Endothelial cell of umbilical vein (primary cell): ENCODE measurements at regions of chr3 and their contacts with region 1.

Region 1: GRCh38 chr3:38521391-38521987 is 25.3 kb downstream of the EXOG start:
- DNase-seq: peak; percentile 81
- H3K4me3 ChIP-seq: no peak overlapping the region
- H3K27ac ChIP-seq: no peak overlapping the region
- H3K4me1 ChIP-seq: peaks cover 4% of the 10 kb centered on the region
- H3K27me3 ChIP-seq: no peaks in the 10 kb centered on the region
- CTCF ChIP-seq: peak; percentile 84
- POLR2A ChIP-seq: no peak

Region 2: DNA sequence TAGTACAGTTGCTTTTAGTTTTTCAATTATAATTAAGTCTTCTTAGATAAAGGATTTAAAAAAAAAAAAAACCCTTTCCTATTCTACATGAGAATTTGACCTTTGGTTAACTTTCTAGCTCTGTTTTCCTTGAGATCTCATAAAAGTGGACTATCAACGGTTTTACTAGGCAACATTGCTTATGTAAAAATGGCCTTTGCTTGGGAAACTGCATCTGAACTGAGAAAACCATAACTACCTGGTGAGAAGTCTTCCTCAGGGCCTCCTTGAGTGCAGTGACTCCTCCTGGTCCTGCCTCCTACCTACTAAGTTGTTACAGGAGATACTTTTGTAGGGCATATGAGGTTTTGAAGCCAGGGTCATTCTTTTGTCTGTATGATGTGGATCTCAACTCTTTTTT is 109.9 kb before region 1 on chr3:
- CTCF ChIA-PET with region 1: no interaction called
- POLR2A ChIA-PET with region 1: no interaction called
- dilution Hi-C with region 1: no loop called
- intact Hi-C with region 1: no loop called
- DNase-seq: no peak
- H3K4me3 ChIP-seq: no peak overlapping the region
- H3K27ac ChIP-seq: no peak overlapping the region
- H3K4me1 ChIP-seq: no peaks in the 10 kb centered on the region
- H3K27me3 ChIP-seq: no peaks in the 10 kb centered on the region
- CTCF ChIP-seq: no peak
- POLR2A ChIP-seq: no peak

Region 3: DNA sequence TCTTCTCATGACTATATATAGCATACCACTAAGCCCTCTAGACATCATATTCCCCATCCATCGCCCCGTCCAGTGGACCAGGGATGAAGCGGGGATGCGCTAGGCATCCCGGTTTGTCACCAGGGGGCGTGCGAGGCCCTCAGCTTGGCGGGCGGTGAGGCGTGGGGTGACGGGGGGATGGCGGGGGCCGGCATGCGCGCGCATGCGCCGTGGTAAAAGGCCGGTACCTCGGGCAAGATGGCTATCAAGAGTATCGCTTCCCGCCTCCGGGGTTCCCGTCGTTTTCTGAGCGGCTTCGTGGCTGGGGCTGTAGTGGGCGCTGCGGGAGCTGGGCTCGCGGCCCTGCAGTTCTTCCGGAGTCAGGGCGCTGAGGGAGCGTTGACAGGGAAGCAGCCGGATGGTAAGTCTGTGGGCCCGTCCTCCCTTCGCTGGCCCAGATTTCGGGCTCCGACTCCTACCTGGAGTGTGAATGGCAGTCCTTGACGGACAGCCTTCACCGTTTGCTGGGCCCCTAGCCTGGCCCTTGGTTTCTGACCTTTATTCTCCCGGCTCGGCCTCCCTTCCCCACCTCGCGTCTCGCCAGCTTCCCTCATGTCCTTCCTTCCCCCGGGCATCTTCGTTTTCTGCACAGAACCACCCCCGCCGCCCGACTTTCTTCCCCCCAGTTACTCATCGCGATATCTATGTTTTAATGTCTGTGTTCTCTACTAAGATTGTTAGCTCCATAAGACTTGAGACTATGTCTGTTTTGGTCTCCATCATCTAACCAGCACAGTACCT is 25.2 kb before region 1 on chr3 and contains the start of gene EXOG:
- CTCF ChIA-PET with region 1: interaction called, 13 read pairs
- POLR2A ChIA-PET with region 1: no interaction called
- dilution Hi-C with region 1: no loop called
- intact Hi-C with region 1: no loop called
- DNase-seq: peak; percentile 93
- H3K4me3 ChIP-seq: peak within 1 kb of the TSS; percentile 73 to 84 (median 80)
- H3K27ac ChIP-seq: peak within 1 kb of the TSS; percentile 4
- H3K4me1 ChIP-seq: peaks cover 7% of the 10 kb centered on the region
- H3K27me3 ChIP-seq: no peaks in the 10 kb centered on the region
- CTCF ChIP-seq: peak; percentile 84 to 94
- POLR2A ChIP-seq: peak; percentile 77
- total RNA-seq, gene EXOG: 21.8 and 21.9 TPM in 2 replicates

Region 4: DNA sequence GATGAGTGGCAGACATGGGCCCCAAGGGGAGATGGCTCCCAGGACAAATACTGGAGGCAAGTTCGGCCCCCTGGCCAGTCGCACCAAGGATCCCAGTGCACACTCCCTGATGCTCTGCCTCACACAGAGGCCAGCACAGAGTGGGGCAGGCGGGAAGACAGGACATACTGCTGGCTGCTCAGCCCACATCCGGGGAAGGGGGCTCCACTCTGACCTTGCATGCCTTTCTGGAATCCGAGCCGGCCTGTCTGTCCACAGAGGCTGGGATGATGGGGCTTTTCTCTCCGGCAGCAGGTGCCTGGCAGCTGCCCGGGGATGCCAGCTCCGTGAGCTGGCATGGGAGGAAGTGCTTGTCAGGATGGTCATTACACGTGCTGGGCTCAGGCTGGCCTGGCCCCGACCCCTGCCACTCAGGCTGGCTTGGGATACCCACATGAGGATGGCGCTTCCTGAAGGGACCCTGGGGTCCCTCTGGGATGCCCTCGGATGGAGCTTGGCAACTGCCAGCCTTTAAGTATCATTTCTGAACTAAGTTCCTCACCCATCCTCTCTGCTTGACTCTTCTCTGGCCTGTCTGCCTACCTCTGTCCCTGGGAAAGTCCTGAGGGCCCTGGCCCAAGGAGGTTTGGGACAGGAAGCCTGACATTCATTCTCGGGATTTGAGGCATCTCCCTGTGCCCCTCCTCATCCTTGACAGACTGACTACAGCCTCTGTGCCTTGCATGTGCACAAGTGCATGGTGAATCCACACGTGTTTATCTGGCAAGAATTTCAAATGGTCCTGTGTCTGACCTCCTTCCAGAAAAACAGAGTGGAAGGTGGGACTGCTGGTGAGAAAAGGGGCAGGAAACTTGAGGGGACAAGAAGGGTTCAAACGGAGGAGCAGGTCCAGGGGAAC is 21.2 kb after region 1 on chr3:
- CTCF ChIA-PET with region 1: interaction called, 13 read pairs
- POLR2A ChIA-PET with region 1: no interaction called
- dilution Hi-C with region 1: no loop called
- intact Hi-C with region 1: no loop called
- DNase-seq: no peak
- H3K4me3 ChIP-seq: no peak overlapping the region
- H3K27ac ChIP-seq: no peak overlapping the region
- H3K4me1 ChIP-seq: no peaks in the 10 kb centered on the region
- H3K27me3 ChIP-seq: no peaks in the 10 kb centered on the region
- CTCF ChIP-seq: no peak
- POLR2A ChIP-seq: no peak

Region 5: GRCh38 chr3:38634111-38634510 is 112.6 kb after region 1 on chr3:
- CTCF ChIA-PET with region 1: interaction called, 16 read pairs
- POLR2A ChIA-PET with region 1: no interaction called
- dilution Hi-C with region 1: no loop called
- intact Hi-C with region 1: no loop called
- DNase-seq: no peak
- H3K4me3 ChIP-seq: no peak overlapping the region
- H3K27ac ChIP-seq: no peak overlapping the region
- H3K4me1 ChIP-seq: peaks cover 10% of the 10 kb centered on the region
- H3K27me3 ChIP-seq: no peaks in the 10 kb centered on the region
- CTCF ChIP-seq: no peak
- POLR2A ChIP-seq: no peak

Region 6: DNA sequence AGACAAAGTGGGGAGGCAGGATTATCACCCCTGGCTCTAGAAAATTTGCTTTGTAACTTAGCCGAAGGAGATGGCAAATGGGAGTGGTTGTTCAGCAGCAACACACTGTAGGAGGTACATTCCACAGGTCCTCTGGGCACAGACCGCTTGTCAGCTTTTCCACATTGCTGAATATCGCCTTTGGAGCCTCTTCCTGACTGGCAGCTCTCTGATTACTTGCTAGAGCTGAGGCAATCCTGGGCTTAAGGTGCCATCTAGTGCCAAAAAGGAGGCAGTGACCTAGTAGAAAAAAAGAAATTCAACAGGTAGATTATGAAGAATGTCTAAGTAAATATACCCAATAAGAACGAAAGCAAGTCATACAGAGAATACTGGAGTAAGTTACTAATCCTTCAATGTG is 141.1 kb after region 1 on chr3:
- CTCF ChIA-PET with region 1: interaction called, 455 read pairs
- POLR2A ChIA-PET with region 1: no interaction called
- dilution Hi-C with region 1: no loop called
- intact Hi-C with region 1: loop called (anchors 1 kb)
- DNase-seq: peak; percentile 58
- H3K4me3 ChIP-seq: no peak overlapping the region
- H3K27ac ChIP-seq: no peak overlapping the region
- H3K4me1 ChIP-seq: no peaks in the 10 kb centered on the region
- H3K27me3 ChIP-seq: peaks cover 16 to 19% of the 10 kb centered on the region in 2 experiments
- CTCF ChIP-seq: peak; percentile 41 to 52
- POLR2A ChIP-seq: no peak

Region 7: DNA sequence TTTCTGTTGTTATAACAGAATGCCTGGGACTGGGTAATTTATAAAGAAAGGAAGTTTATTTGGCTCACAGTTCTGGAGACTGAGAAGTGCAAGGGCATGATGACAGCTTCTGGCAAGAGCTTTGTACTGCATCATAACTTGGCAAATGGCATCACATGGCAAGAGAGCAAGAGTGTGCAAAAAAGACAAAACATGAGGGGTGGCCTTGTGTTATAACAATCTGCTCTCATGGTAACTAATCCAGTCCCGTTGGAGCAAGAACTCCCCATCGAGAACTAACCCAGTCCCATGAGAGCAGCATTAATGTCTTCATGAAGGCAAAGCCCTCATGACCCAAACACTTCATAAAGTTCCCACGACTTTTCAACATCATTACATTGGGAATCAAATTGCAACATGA is 507.1 kb after region 1 on chr3:
- CTCF ChIA-PET with region 1: interaction called, 13 read pairs
- POLR2A ChIA-PET with region 1: no interaction called
- dilution Hi-C with region 1: no loop called
- intact Hi-C with region 1: loop called (anchors 1 kb)
- DNase-seq: no peak
- H3K4me3 ChIP-seq: no peak overlapping the region
- H3K27ac ChIP-seq: no peak overlapping the region
- H3K4me1 ChIP-seq: no peaks in the 10 kb centered on the region
- H3K27me3 ChIP-seq: peaks cover 11 to 16% of the 10 kb centered on the region in 2 experiments
- CTCF ChIP-seq: no peak
- POLR2A ChIP-seq: no peak